HEK293 (cell line): ENCODE measurements at regions of chr2 and their contacts with region 1.

Region 1: GRCh38 chr2:229401171-229401851 is 130.2 kb upstream of the PID1 start:
- H3K4me3 ChIP-seq: no peak overlapping the region
- H3K27ac ChIP-seq: no peak overlapping the region
- H3K4me1 ChIP-seq: no peaks in the 10 kb centered on the region
- CTCF ChIP-seq: no peak

Region 2: DNA sequence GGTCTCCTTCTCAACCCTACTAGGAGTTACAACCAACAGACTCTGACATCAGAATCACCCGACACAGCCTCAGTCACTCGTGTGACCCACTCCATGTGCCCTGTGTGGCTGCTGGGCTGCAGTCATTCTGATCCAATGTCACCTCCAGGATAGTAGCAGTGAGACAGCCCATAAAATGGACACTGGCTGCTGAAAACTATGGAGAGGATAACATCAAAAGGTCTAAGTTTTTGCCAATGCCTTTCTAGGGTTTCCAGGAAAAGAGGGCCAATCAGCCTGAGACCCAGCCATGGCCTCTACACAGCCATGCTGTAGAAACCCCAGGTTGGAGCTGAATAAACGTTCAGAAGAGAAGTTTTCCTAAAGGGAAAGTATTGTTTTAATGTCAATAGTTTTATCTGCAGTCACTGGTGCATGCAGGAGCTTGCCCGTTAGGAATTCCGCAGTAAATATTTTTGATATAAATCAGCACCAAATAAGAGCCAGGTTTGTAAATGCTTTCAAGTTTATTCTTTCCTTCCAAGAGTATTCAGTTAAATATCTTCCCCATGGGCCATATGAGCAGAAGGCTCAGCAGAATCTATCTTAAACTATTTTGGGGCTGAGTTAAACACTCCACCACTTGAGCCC is 38.0 kb before region 1 on chr2:
- CTCF ChIA-PET with region 1: no interaction called
- POLR2A ChIA-PET with region 1: interaction called, 10 read pairs
- H3K4me3 ChIP-seq: no peak overlapping the region
- H3K27ac ChIP-seq: no peak overlapping the region
- H3K4me1 ChIP-seq: no peaks in the 10 kb centered on the region
- CTCF ChIP-seq: no peak

Region 3: DNA sequence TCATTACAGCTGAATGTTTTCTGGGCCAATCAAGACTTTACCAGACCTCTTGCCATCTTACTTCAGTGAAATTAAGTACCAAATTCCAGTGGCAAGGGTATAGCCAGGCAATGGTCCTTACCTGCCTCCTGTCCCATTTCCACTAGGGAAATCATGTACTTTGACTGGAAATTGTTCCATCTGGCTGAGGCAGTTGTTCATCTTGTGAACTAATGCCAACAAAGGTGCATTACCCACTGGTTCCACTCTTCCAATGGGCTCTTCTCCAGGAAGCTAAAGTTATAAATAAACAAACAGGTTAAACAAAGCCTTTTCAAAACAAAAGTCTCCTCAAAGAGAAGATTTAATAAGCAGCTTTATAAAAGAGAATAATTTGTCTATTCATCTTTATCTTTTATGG is 393.7 kb after region 1 on chr2:
- CTCF ChIA-PET with region 1: no interaction called
- POLR2A ChIA-PET with region 1: no interaction called
- H3K4me3 ChIP-seq: no peak overlapping the region
- H3K27ac ChIP-seq: no peak overlapping the region
- H3K4me1 ChIP-seq: no peaks in the 10 kb centered on the region
- CTCF ChIP-seq: no peak